H1 (cell line): ENCODE measurements at regions of chr6 and their contacts with region 1.

Region 1: DNA sequence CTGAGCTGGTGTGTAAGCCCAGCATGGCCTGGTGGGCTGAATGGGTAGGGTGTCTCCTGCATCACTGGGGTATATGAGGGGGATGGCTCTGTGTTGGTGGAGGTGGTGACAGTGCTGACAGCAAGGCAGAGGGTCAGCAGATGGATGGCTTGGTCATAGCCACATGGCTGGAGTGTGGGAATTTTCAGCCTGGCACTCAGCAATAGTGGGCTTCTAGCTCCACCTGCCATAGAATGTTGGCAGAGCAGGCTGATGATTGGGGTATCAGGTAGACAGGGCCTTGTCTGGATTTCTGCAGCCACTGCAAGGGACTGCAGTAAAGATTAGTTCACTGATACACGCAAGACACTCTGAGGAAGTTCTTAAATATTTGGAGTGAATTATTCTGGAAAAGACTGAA is 137.5 kb upstream of the BACH2 start:
- DNase-seq: no peak
- H3K4me3 ChIP-seq: no peak overlapping the region
- H3K27ac ChIP-seq: no peak overlapping the region
- H3K4me1 ChIP-seq: peaks cover 0 to 20% (median 15%) of the 10 kb centered on the region in 4 experiments; a peak in 4 of 7 replicates
- H3K27me3 ChIP-seq: no peaks in the 10 kb centered on the region; a peak in 1 of 7 replicates
- CTCF ChIP-seq: peak; percentile 57 to 81 (median 78)
- EP300 ChIP-seq: no peak
- POLR2A ChIP-seq: no peak
- RAD21 ChIP-seq: peak; percentile 90 to 91

Region 2: DNA sequence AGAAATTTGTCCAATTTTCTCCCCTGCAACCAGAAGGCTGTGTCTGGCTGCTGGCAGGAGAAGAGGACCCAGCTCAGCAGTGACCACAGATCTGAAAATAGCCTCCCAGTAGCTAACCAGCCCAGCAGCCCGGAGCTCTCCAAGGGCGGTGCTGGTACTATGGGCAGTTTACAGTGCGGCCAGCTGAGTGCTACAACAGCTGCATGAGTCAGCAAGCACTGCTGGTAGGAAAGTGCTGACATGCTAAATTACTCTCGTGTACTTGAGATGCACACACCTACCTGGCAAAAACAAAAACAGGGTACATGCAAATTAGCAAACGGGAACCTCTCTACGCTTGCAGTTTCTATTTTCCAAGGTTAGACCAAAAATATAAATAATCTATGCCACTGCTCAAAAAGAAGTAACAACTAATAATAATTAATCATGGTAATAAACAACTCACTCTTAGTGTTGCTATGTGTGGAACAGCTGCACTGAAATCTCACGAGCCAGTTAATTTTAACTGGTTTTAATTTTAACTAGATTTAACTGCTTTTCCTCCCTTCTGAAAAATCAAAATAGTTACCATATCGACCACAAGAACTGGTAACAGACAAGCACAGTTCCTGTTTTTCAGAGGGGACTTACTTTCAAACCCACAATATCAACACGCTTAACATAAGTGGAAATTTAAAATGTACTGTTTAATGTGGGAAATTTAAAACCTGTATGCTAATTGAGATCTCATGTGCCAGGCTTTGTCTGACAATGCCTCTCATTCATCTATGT is 148.3 kb before region 1 on chr6:
- CTCF ChIA-PET with region 1: interaction called, 32 read pairs
- POLR2A ChIA-PET with region 1: no interaction called
- DNase-seq: no peak
- H3K4me3 ChIP-seq: no peak overlapping the region
- H3K27ac ChIP-seq: no peak overlapping the region
- H3K4me1 ChIP-seq: peaks cover 7 to 19% (median 12%) of the 10 kb centered on the region in 4 experiments; a peak in 6 of 7 replicates
- H3K27me3 ChIP-seq: no peaks in the 10 kb centered on the region
- CTCF ChIP-seq: no peak
- EP300 ChIP-seq: peak in 1 of 2 experiments; percentile 40; a peak in 1 of 3 replicates
- POLR2A ChIP-seq: no peak
- RAD21 ChIP-seq: 0 out of 4 replicates have a peak, but pooled peaks of 1 of the 2 experiments have one; percentile 20

Region 3: GRCh38 chr6:90677440-90677839 is 243.3 kb after region 1 on chr6:
- CTCF ChIA-PET with region 1: no interaction called
- POLR2A ChIA-PET with region 1: no interaction called
- DNase-seq: no peak
- H3K4me3 ChIP-seq: no peak overlapping the region
- H3K27ac ChIP-seq: no peak overlapping the region
- H3K4me1 ChIP-seq: peaks cover 0 to 16% (median 12%) of the 10 kb centered on the region in 4 experiments; a peak in 4 of 7 replicates
- H3K27me3 ChIP-seq: no peaks in the 10 kb centered on the region
- CTCF ChIP-seq: no peak
- EP300 ChIP-seq: no peak
- POLR2A ChIP-seq: no peak
- RAD21 ChIP-seq: no peak